Posterior vena cava (tissue), 2 donors: ENCODE measurements at regions of chr14 and their contacts with region 1.

Region 1: DNA sequence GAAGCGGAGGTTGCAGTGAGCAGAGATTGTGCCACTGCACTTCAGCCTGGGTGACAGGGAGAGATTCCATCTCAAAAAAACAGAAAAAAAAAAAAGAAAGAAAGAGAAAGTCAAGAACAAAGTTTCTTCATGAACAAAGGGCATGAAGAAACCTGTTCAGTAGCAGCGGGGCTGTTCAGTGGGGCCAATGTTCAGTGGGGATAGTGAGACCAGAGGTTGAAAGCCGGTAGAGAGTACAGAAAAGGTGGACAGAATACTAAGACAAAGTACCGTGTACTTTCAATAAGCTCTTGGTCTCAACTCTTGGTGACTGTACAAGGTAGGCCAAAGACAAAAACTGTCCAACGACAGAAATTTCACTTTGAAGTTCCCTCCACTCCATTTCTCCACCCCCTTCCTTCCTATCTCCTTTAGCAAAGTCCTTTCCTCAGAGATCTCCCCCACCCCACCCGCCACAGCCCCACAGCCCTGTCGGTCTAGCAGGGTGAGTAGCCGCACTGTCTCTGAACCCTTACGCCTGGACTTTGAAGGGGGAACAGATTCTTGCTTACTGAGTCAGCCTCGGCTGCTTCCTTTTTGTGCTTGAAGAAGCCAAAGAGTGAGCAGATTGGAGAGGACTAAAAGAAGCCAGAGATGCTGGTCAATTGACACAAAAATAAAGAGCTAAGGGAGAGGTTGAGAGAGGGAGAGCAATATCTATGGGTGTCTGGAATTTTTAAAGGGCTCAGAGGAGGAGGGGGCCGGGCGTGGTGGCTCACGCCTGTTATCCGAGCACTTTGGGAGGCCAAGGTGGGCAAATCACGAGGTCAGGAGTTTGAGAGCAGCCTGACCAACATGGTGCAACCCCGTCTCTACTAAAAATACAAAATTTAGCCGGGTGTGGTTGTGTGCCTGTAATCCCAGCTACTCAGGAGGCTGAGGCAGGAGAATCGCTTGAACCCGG is 44.2 kb upstream of the FOS start:
- DNase-seq: peak; percentile 88

Region 2: DNA sequence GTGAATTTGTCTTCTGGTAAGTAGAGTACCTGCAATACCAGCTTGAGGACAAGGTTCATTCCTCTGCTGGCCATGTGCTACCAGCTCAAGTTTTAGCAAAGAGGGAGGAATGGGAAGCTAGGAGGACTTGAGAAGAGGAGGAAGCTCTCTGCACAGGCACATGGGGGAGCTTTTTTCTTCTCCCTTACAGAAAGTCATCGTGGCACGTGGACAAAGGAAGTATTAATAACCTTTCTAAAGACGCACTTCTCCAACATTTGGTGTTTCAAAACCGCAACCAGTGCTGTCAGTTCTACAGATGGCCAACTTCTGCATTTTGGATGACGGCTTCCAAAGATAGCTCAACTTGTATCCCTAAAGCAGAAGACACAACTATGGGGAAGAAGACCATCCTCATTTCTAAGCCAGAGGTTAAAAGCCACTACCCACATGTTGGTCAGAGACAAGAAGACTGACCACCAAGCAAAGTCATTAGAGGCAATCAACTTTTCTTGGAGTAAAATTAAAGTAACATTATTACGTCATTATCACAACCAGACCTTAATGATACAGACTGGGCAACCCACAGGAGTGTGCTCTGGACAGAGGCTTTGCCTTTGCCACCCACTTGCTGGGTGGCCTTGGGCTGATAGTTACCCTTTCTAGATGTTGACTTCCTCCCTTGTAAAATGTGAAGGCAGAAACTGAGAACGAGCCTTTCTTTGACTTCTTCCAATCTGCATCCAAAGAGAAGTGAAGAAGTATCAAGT is 45.8 kb before region 1 on chr14:
- intact Hi-C with region 1: loop called in 1 of 2 experiments (anchors 5 kb)
- DNase-seq: no peak